BJ (cell line): ENCODE measurements at regions of chr10 and their contacts with region 1.

Region 1: DNA sequence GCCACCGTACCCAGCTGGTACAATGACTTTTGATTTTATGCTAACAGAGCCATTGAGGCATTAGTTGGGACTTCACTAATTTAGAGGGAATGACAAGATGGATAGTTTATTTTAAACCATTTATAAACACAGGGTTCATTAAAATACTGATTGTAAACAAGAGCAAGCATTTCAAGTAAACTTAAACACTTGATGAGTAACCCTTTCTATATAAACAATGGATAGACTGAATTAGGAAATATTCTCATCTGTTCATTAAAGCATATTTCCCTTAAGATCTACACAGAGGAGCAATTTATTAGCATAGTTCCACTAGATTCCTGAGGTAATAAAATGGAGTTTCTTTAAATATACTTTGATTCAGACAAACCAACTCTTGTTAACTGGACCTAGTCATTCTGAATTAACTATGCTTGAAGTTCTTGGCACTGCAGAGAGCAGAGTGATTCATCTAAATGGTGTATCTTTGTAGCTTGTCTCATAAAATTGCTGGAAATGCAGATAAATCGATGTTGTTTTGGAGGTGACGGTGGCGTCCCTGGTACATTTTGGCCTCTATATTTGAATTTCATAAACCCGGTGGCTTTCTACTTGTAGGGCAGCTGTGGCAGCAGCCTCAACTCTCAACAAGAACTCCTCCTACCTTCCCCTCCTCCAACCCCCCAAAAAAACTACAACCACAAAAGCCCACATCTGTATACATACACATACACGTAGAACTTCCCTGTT is 15.4 kb upstream of the VDAC2 start:
- DNase-seq: peak; percentile 90
- H3K4me3 ChIP-seq: no peak overlapping the region
- H3K27me3 ChIP-seq: no peaks in the 10 kb centered on the region
- CTCF ChIP-seq: no peak

Region 2: DNA sequence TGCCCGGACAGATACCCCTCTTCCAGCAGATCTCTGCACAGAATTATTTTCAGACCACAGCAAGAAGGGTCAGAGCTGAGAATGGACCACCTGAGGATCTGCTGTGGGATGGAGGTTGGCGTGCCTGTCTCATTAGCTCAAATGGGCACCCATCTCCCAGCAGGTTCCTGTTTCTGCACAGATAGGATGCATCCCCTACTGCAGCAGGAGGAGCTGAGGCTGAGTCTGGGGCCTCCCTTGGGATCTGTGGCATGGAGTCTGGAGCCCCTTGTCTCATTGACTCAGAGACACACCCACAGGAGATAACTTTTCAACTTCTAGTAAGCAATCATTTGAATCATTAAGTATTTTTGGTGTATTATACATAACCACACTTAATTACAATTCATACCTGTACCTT is 831.5 kb before region 1 on chr10:
- CTCF ChIA-PET with region 1: no interaction called
- POLR2A ChIA-PET with region 1: no interaction called
- DNase-seq: no peak
- H3K4me3 ChIP-seq: no peak overlapping the region
- H3K27me3 ChIP-seq: no peaks in the 10 kb centered on the region
- CTCF ChIP-seq: no peak

Region 3: DNA sequence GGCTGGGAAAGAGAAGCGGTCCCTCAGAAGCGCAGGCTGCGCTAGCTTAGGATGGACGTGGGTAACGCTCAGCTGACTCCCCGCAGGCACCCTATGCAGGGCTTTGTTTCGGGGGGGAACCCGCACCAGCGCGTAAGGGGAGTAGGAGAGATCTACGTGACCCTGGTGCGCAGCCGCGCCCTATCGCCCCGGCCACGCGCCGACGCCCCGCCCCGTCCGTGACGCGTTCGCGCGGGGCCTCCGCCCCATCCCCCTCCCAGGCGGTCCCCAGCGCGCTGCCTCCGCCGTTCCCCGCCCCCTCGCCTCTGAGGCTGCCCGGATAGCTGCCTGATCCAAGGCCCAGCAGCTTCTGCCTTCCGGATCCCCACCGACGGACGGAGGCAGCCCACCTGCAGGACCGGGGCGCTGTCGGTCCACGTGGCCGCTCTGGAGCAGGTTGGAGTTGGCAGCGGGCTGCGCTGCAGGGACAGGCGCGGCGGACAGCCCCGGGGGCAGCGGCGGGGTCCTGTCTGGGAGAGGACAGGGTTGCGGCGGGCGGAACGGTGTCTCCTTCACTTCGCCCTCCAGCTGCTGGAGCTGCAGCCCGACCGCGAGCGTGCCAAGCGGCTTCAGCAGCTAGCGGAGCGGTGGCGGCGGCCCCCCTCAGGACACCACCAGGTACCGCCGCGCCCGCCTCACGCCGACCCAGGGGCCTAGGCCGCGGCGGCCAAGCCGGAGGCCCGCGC is 15.2 kb after region 1 on chr10 and contains the start of gene VDAC2:
- CTCF ChIA-PET with region 1: interaction called, 13 read pairs
- POLR2A ChIA-PET with region 1: no interaction called
- DNase-seq: no peak
- H3K4me3 ChIP-seq: peak within 1 kb of the TSS; percentile 79
- H3K27me3 ChIP-seq: no peaks in the 10 kb centered on the region
- CTCF ChIP-seq: no peak
- polyA plus RNA-seq, gene VDAC2: 80.9 and 149 TPM in 2 replicates

Region 4: DNA sequence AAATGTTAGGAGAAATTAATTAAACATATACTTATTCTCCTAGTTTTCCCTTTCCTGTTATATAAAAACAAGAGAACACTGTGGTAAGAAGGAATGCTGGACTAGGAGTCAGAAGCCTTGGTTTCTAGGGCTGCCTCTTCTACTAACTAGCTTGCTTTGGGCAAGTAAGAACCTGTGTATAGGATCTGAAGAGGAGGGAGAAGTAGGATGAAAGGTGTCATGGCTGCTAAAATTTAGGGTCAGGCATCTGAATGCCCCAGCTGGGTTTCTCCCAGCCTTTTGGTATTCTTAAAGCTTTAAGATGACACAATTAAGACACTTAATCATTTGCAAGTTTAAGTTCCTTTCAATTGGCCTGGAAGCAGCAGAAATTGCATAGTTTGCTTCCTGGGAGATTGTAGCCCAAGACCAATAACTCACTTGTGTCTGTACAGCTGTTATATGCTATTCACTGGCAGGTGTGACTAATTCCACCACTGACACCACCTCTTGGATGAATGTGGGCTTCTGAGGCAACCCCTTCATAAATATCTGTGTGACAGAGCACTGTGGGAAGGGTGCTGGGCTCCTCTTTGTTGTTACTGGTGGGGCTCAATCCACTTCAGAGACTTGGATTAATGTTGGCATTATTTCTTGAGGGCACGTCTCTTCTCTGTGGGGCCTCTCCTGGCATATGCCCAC is 373.4 kb after region 1 on chr10:
- CTCF ChIA-PET with region 1: no interaction called
- POLR2A ChIA-PET with region 1: no interaction called
- DNase-seq: no peak
- H3K4me3 ChIP-seq: no peak overlapping the region
- H3K27me3 ChIP-seq: no peaks in the 10 kb centered on the region
- CTCF ChIP-seq: no peak

Region 5: GRCh38 chr10:75910032-75910431 is 714.8 kb after region 1 on chr10:
- CTCF ChIA-PET with region 1: no interaction called
- POLR2A ChIA-PET with region 1: interaction called, 14 read pairs
- DNase-seq: no peak
- H3K4me3 ChIP-seq: no peak overlapping the region
- H3K27me3 ChIP-seq: no peaks in the 10 kb centered on the region
- CTCF ChIP-seq: peak; percentile 48

Region 6: DNA sequence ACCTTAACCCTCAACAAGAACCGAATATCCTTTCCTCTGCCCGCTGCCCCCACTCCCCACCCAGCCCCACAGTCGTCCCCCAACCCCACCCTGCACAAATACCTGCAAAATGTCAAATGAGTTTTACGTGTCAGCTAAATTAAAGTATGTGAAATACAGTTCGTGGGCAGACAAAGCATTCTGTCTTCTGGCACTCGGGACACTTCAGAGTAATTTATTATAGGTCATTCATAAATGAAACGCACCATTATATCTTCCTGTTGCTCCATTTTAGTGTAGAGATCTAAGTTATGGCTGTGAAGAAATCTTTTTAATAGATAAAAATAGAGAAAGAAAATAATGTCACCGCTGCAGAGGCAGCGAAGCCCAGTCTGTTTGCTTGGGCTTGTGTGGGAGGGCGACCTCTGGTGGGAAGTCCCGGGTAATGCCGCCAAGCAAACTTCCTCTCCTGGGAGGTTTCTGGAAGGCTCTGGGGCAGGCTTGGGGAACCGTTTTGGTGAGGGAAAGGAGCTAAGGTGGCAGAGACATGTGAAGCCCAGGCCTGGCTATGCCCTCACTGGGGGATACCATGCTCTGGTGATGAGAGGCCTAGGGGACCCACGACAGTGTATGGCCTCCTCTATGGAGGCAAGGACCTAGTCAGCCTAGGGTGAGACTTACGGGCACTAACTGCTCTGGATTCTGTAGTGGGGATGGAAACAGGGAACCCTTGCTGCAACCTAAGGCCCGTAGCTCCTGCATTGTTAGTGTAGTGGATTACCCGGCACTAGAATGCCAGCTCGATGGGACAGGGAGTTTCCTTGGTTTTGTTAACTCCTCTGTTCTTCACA is 841.1 kb after region 1 on chr10:
- CTCF ChIA-PET with region 1: no interaction called
- POLR2A ChIA-PET with region 1: no interaction called
- DNase-seq: no peak
- H3K4me3 ChIP-seq: no peak overlapping the region
- H3K27me3 ChIP-seq: no peaks in the 10 kb centered on the region
- CTCF ChIP-seq: peak; percentile 94